ENCODE measurements at regions of chr10 and their contacts with region 1.

Region 1: GRCh38 chr10:19922236-19922963 is 106.2 kb downstream of the PLXDC2 start:
- DNase-seq: peak; percentile 91
- H3K4me3 ChIP-seq: no peak overlapping the region
- H3K27ac ChIP-seq: peak overlapping the region; percentile 91
- H3K4me1 ChIP-seq: peaks cover 51% of the 10 kb centered on the region
- H3K27me3 ChIP-seq: no peaks in the 10 kb centered on the region
- CTCF ChIP-seq: no peak

Region 2: DNA sequence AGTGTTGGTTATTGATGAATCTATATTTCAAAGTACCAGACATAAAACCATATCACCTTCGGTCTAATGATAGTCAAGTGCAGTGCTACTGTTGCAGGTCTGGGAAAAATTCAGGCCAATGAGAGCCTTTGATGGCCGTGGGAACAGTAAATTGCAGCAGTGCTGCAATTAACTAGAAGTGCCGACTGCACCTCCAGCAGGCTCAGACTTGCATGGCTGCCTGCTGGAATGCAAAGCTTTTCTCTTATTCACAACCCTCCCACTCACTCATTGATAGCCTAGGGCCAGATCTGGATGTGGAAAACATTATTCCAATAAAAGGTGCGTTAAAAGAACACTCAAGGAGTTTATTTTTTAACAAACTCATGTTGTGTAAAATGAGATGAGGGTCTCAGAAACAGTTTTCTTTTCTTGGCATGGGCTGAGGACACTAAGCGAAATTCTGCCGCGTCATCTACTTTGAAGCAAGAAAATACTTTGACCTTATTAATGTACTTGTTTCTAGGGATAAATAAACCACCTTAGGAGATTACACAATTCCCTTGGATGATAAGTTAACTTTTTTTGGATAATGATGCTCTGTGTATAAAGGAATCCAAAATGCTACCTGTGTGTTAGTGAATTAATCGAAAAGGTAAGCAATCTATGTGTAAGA is 89.1 kb before region 1 on chr10:
- CTCF ChIA-PET with region 1: no interaction called
- dilution Hi-C with region 1: loop called (anchors 5 kb)
- in situ Hi-C with region 1: no loop called
- intact Hi-C with region 1: loop called (anchors 1 kb)
- DNase-seq: peak; percentile 89
- H3K4me3 ChIP-seq: peak overlapping the region in 2 of 3 experiments; percentile 27 to 29
- H3K27ac ChIP-seq: peak overlapping the region; percentile 94
- H3K4me1 ChIP-seq: peaks cover 36% of the 10 kb centered on the region
- H3K27me3 ChIP-seq: no peaks in the 10 kb centered on the region
- CTCF ChIP-seq: no peak

Region 3: DNA sequence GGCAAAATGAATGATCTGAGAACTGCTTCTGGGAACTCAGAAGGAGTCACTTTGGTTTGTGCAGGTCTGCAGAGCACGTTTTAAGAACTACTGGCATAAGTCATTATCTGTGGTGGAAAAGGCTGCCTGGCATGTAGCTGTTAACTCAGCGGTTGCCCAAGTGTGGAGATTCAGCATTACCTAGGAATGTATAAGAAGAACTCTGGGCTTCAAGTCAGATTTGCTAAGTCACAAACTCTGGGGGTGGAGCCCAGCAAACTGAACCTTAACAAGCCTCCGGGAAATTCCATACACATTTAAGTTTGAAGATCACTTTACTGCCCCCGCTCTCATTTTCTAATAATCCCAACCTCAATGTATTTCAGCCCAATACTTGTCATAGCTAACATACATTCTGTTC is 75.1 kb before region 1 on chr10:
- CTCF ChIA-PET with region 1: no interaction called
- dilution Hi-C with region 1: no loop called
- in situ Hi-C with region 1: no loop called
- intact Hi-C with region 1: loop called (anchors 2 kb)
- DNase-seq: peak; percentile 95
- H3K4me3 ChIP-seq: no peak overlapping the region
- H3K27ac ChIP-seq: peak overlapping the region; percentile 77
- H3K4me1 ChIP-seq: peaks cover 22% of the 10 kb centered on the region
- H3K27me3 ChIP-seq: no peaks in the 10 kb centered on the region
- CTCF ChIP-seq: no peak

Region 4: GRCh38 chr10:19977097-19977588 is 54.7 kb after region 1 on chr10:
- CTCF ChIA-PET with region 1: no interaction called
- dilution Hi-C with region 1: no loop called
- in situ Hi-C with region 1: no loop called
- intact Hi-C with region 1: no loop called
- DNase-seq: no peak
- H3K4me3 ChIP-seq: no peak overlapping the region
- H3K27ac ChIP-seq: no peak overlapping the region
- H3K4me1 ChIP-seq: peaks cover 4% of the 10 kb centered on the region
- H3K27me3 ChIP-seq: no peaks in the 10 kb centered on the region
- CTCF ChIP-seq: no peak

Measured in mammary epithelial cell (primary cell).